Endothelial cell of umbilical vein (primary cell): ENCODE measurements at regions of chr5 and their contacts with region 1.

Region 1: GRCh38 chr5:38382898-38383297 is 124.5 kb downstream of the EGFLAM start:
- DNase-seq: peak; percentile 72
- H3K4me3 ChIP-seq: no peak overlapping the region
- H3K27ac ChIP-seq: no peak overlapping the region
- H3K4me1 ChIP-seq: no peaks in the 10 kb centered on the region
- H3K27me3 ChIP-seq: peaks cover under 1 to 2% of the 10 kb centered on the region in 2 experiments
- CTCF ChIP-seq: peak; percentile 80 to 81
- POLR2A ChIP-seq: no peak

Region 2: GRCh38 chr5:38208782-38209378 is 174.0 kb before region 1 on chr5:
- CTCF ChIA-PET with region 1: no interaction called
- POLR2A ChIA-PET with region 1: no interaction called
- dilution Hi-C with region 1: no loop called
- intact Hi-C with region 1: loop called (anchors 2 kb)
- DNase-seq: peak; percentile 22
- H3K4me3 ChIP-seq: no peak overlapping the region
- H3K27ac ChIP-seq: no peak overlapping the region
- H3K4me1 ChIP-seq: no peaks in the 10 kb centered on the region
- H3K27me3 ChIP-seq: no peaks in the 10 kb centered on the region
- CTCF ChIP-seq: peak; percentile 21 to 33
- POLR2A ChIP-seq: no peak

Region 3: GRCh38 chr5:38396766-38397165 is 13.9 kb after region 1 on chr5:
- CTCF ChIA-PET with region 1: interaction called, 14 read pairs
- POLR2A ChIA-PET with region 1: no interaction called
- dilution Hi-C with region 1: no loop called
- intact Hi-C with region 1: no loop called
- DNase-seq: no peak
- H3K4me3 ChIP-seq: no peak overlapping the region
- H3K27ac ChIP-seq: no peak overlapping the region
- H3K4me1 ChIP-seq: peaks cover 14% of the 10 kb centered on the region
- H3K27me3 ChIP-seq: no peaks in the 10 kb centered on the region
- CTCF ChIP-seq: no peak
- POLR2A ChIP-seq: no peak

Region 4: GRCh38 chr5:38404667-38405276 is 21.9 kb after region 1 on chr5:
- CTCF ChIA-PET with region 1: interaction called, 14 read pairs
- POLR2A ChIA-PET with region 1: no interaction called
- dilution Hi-C with region 1: no loop called
- intact Hi-C with region 1: loop called (anchors 1 kb)
- DNase-seq: no peak
- H3K4me3 ChIP-seq: no peak overlapping the region
- H3K27ac ChIP-seq: no peak overlapping the region
- H3K4me1 ChIP-seq: peaks cover 25% of the 10 kb centered on the region
- H3K27me3 ChIP-seq: peaks cover 0 to 3% of the 10 kb centered on the region in 2 experiments
- CTCF ChIP-seq: no peak
- POLR2A ChIP-seq: no peak

Region 5: DNA sequence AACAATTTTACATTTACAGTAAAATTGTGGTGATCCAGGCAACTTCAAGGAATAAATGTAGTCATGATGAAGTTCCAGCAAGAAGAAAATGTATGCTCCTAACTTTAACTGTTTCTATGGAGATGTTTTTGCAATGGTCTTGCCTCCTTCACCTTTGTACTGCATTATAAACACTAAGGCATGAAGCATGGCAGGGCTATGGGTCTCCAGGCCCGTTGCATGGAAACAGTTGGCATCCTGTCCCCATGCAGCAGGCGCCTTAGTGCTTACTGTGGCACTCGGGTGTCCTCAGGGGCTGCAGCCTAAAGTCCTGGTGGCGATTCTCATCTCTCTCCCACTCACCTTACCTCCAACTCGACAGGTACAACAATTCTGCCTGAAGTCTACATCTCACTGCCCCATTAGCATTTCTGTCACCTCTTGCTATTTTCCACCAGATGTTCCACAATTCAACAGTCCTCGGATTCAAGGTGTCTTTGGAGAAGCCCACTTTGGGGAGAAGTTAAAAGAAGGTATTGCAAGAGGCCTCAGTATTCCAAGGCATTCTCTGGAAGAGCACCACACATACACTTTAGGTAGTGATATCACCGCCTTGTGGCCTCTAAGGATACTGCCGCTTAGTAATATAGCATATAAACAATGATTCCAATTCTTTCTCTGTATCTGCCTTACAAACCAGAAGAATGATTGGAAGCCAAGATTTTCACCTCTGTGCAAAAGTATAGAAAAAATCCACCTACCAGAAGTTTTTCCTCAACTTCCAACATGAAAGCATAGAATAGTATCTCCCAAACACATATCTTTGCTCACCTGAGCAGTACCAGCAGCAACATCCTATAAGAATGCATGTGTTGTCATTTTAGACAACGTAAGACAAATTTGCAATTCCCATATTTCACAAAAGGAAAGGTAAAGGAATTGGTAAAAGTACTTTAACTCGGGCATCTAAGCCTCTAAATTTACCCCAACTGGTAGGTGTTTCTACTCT is 168.4 kb after region 1 on chr5:
- CTCF ChIA-PET with region 1: interaction called, 6 read pairs
- POLR2A ChIA-PET with region 1: no interaction called
- dilution Hi-C with region 1: no loop called
- intact Hi-C with region 1: loop called (anchors 2 kb)
- DNase-seq: peak; percentile 59
- H3K4me3 ChIP-seq: no peak overlapping the region
- H3K27ac ChIP-seq: no peak overlapping the region
- H3K4me1 ChIP-seq: peaks cover 27% of the 10 kb centered on the region
- H3K27me3 ChIP-seq: no peaks in the 10 kb centered on the region
- CTCF ChIP-seq: peak; percentile 57 to 61
- POLR2A ChIP-seq: no peak